Breast epithelium (tissue), 4 donors: ENCODE measurements at regions of chr7 and their contacts with region 1.

Region 1: GRCh38 chr7:50812841-50813475 is 30.3 kb upstream of the GRB10 start:
- DNase-seq: peak; percentile 59 to 76
- H3K4me3 ChIP-seq: no peak overlapping the region
- H3K27ac ChIP-seq: no peak overlapping the region
- H3K4me1 ChIP-seq: no peaks in the 10 kb centered on the region
- H3K27me3 ChIP-seq: no peaks in the 10 kb centered on the region
- CTCF ChIP-seq: no peak
- POLR2A ChIP-seq: no peak

Region 2: GRCh38 chr7:50953820-50954219 is 140.9 kb after region 1 on chr7:
- intact Hi-C with region 1: no loop called
- DNase-seq: no peak
- H3K4me3 ChIP-seq: no peak overlapping the region
- H3K27ac ChIP-seq: peak overlapping the region; percentile 50 to 84
- H3K4me1 ChIP-seq: no peaks in the 10 kb centered on the region
- H3K27me3 ChIP-seq: no peaks in the 10 kb centered on the region
- CTCF ChIP-seq: no peak
- POLR2A ChIP-seq: no peak

Region 3: DNA sequence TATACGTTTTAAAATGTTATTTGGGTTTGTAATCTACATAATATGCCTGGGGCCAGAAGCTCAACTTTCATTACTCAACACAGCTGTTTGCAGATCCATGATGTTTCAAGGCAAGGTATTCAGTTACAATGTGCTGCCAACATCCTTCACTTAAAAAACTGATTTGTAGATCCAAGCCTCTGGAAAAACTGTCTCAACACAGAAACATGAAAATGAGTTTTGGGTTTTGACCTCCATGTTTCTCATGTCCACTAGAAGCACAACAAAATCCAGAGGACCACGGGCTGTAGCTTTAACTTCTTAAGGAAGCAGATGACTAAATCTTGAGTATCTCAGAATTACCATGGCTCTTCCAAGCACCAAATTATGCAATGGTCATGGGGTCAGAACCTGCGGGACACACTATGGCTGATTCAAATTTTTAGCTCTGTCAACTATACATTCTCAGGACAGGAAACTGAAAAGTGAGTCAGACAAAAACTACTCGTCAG is 216.8 kb after region 1 on chr7:
- intact Hi-C with region 1: no loop called
- DNase-seq: no peak
- H3K4me3 ChIP-seq: no peak overlapping the region
- H3K27ac ChIP-seq: no peak overlapping the region
- H3K4me1 ChIP-seq: no peaks in the 10 kb centered on the region
- H3K27me3 ChIP-seq: no peaks in the 10 kb centered on the region
- CTCF ChIP-seq: no peak
- POLR2A ChIP-seq: no peak

Region 4: GRCh38 chr7:52369922-52370321 is 1557.0 kb after region 1 on chr7:
- intact Hi-C with region 1: loop called (anchors 10 kb)
- DNase-seq: no peak
- H3K4me3 ChIP-seq: no peak overlapping the region
- H3K27ac ChIP-seq: no peak overlapping the region
- H3K4me1 ChIP-seq: no peaks in the 10 kb centered on the region
- H3K27me3 ChIP-seq: no peaks in the 10 kb centered on the region
- CTCF ChIP-seq: no peak
- POLR2A ChIP-seq: no peak